ENCODE measurements at regions of chr2 and their contacts with region 1.

Region 1: DNA sequence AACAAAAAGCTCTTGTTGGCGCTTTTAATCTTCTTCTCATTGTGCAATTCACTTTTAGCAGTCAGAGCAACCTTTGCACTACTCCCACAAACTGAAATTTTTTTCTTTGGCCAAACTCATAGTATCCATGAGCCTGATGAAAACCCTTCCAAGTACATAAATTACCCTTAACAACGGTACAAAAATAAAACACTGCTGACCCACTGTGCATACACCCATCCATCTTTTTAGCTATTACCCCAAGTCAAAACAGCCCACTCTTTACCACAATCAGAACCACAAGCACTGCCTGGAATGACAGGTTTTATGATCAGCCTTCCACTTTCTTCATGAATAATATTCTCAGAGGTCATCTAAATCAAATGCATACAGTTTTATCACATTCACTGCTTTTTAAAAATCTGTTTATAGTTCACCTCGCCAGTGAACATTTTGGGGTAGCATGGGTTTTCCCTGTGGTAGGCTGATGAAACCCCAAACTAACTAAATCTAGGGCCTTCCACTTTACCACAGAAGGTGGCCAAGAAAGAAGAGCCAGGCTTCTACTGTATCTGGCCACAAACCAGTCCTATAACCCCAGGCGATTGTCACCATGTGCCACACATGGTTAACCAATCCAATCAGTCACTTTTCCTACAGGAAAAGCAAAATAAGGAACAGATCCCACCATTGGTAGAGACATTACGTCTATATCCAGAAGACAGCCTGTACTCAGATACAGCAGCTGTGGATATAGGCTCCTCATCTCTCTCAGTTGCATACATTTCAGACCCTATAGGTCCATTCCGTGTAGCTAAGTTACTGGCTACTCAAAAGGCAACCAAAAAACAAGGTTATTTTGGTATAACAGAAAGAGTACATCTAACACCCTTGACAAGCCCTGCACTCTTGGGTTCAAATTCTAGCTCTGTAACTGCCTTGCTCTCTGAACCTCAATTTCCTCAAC is 171.3 kb downstream of the THADA start:
- DNase-seq: peak in 1 of 2 experiments; percentile 38
- H3K4me3 ChIP-seq: no peak overlapping the region
- H3K4me3 Mint-ChIP-seq: peak overlapping the region; percentile 39
- H3K27ac Mint-ChIP-seq: peak overlapping the region; percentile 66
- H3K4me1 ChIP-seq: peaks cover 80% of the 10 kb centered on the region
- H3K4me1 Mint-ChIP-seq: peaks cover 46% of the 10 kb centered on the region
- H3K27me3 ChIP-seq: no peaks in the 10 kb centered on the region
- H3K27me3 Mint-ChIP-seq: no peaks in the 10 kb centered on the region
- CTCF ChIP-seq: no peak

Region 2: DNA sequence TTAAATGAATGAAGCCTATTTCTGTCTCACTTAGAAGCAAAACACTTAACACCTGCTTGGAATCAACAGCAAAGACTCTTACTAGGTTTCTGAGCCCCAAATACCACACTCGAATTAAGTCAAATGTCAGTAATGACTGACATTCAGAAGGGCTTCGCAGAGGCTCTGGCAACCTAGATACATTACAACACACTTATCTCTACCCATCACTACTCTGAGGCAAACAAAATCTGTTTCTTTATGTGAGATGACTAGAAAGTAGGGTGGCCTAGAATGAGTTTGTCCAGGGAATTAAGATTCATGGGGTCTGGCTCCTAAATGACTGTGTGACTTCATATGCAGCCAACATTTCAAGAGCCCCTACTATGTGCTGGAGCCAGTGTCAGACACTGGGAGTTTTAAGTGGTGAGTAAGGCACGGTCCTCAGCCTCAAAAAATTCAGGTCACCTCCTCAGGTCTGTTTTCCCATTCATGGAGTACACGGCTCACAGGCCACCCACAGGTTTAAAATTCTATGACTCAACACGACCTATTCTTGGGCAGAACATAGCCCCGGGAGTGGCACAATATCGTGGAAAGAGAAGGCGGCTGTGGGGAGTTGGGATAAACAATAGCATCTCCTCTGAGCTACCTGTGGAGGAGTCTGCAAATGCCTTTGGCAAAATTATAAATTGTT is 47.9 kb before region 1 on chr2:
- CTCF ChIA-PET with region 1: no interaction called
- POLR2A ChIA-PET with region 1: no interaction called
- intact Hi-C with region 1: loop called (anchors 1 kb)
- DNase-seq: no peak
- H3K4me3 ChIP-seq: no peak overlapping the region
- H3K4me3 Mint-ChIP-seq: peak overlapping the region; percentile 39
- H3K27ac Mint-ChIP-seq: peak overlapping the region; percentile 81
- H3K4me1 ChIP-seq: peaks cover 40% of the 10 kb centered on the region
- H3K4me1 Mint-ChIP-seq: peaks cover 44% of the 10 kb centered on the region
- H3K27me3 ChIP-seq: no peaks in the 10 kb centered on the region
- H3K27me3 Mint-ChIP-seq: no peaks in the 10 kb centered on the region
- CTCF ChIP-seq: no peak

Region 3: GRCh38 chr2:43389581-43390466 is 34.7 kb before region 1 on chr2:
- CTCF ChIA-PET with region 1: no interaction called
- POLR2A ChIA-PET with region 1: interaction called, 9 read pairs
- intact Hi-C with region 1: loop called (anchors 1 kb)
- DNase-seq: peak in 1 of 2 experiments; percentile 60
- H3K4me3 ChIP-seq: no peak overlapping the region
- H3K4me3 Mint-ChIP-seq: peak overlapping the region; percentile 50
- H3K27ac Mint-ChIP-seq: peak overlapping the region; percentile 61
- H3K4me1 ChIP-seq: peaks cover 48% of the 10 kb centered on the region
- H3K4me1 Mint-ChIP-seq: peaks cover 47% of the 10 kb centered on the region
- H3K27me3 ChIP-seq: no peaks in the 10 kb centered on the region
- H3K27me3 Mint-ChIP-seq: no peaks in the 10 kb centered on the region
- CTCF ChIP-seq: no peak

Region 4: DNA sequence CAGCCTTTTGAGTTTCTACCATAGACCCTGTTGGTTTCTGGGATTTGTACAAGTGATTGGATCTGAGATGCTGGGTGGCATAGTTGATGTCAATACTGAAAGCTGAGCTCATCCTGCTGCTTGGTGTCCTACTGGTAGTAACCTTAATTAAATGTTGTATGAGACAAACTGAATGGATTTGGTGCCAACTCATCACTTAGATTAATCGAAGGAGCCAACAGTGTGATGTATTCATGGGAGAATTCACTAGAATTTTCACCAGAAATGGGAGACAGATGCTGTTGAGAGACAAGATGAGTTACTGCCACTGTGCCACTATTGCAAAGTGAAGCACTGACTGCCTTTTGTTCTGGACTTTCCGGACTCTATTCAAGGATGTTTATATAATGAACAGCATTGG is 12.8 kb after region 1 on chr2:
- CTCF ChIA-PET with region 1: interaction called, 7 read pairs
- POLR2A ChIA-PET with region 1: interaction called, 8 read pairs
- intact Hi-C with region 1: loop called (anchors 1 kb)
- DNase-seq: peak in 1 of 2 experiments; percentile 54
- H3K4me3 ChIP-seq: no peak overlapping the region
- H3K4me3 Mint-ChIP-seq: no peak overlapping the region
- H3K27ac Mint-ChIP-seq: peak overlapping the region; percentile 77
- H3K4me1 ChIP-seq: peaks cover 59% of the 10 kb centered on the region
- H3K4me1 Mint-ChIP-seq: peaks cover 42% of the 10 kb centered on the region
- H3K27me3 ChIP-seq: no peaks in the 10 kb centered on the region
- H3K27me3 Mint-ChIP-seq: no peaks in the 10 kb centered on the region
- CTCF ChIP-seq: no peak

Region 5: DNA sequence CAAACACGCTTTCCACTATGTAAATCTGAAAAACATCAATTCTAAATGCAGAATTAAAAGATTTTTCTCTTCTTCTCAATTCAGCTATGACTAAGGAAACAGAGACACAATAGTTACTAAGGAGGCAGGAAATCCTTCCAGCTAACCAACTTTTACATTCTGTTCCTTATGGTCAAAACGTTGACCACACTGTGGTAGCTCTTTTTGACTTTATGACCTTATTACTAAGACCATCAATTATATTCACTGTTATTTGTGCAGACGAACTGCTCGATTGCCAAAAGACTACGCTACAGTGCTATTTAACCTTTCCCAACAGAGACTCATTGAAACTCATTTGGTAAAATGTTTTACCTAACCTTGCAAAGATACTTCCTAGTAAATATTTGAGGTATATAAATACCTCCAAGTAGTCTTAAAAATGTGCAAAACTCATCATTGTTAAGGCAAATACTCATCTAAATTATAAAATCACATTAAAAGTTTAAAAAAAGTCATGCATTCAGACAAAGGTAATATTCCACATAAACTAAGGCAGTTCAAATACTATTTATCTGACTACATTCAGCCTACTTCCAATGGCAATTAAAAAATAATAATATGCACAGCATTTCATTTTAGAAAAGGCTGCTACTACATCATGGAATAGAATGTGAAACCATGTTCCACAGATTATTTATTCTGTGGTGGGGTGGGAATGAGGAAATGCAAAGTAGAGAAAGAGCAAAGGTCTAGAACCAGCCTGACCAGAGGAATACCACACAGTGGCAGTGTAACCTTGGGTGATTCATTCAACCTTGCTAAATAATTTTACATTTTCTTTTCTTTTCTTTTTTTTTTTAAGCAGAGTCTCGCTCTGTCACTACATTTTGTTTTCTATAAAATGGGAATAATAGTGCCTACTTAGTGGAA is 31.5 kb after region 1 on chr2:
- CTCF ChIA-PET with region 1: no interaction called
- POLR2A ChIA-PET with region 1: no interaction called
- intact Hi-C with region 1: loop called (anchors 1 kb)
- DNase-seq: peak in 1 of 2 experiments; percentile 63
- H3K4me3 ChIP-seq: no peak overlapping the region
- H3K4me3 Mint-ChIP-seq: no peak overlapping the region
- H3K27ac Mint-ChIP-seq: peak overlapping the region; percentile 36
- H3K4me1 ChIP-seq: peaks cover 57% of the 10 kb centered on the region
- H3K4me1 Mint-ChIP-seq: peaks cover 52% of the 10 kb centered on the region
- H3K27me3 ChIP-seq: no peaks in the 10 kb centered on the region
- H3K27me3 Mint-ChIP-seq: no peaks in the 10 kb centered on the region
- CTCF ChIP-seq: peak in 1 of 2 experiments; percentile 42

Region 6: GRCh38 chr2:43462866-43463641 is 38.5 kb after region 1 on chr2:
- CTCF ChIA-PET with region 1: no interaction called
- POLR2A ChIA-PET with region 1: no interaction called
- intact Hi-C with region 1: loop called (anchors 1 kb)
- DNase-seq: peak; percentile 85 to 86
- H3K4me3 ChIP-seq: no peak overlapping the region
- H3K4me3 Mint-ChIP-seq: peak overlapping the region; percentile 58
- H3K27ac Mint-ChIP-seq: peak overlapping the region; percentile 89
- H3K4me1 ChIP-seq: peaks cover 65% of the 10 kb centered on the region
- H3K4me1 Mint-ChIP-seq: peaks cover 52% of the 10 kb centered on the region
- H3K27me3 ChIP-seq: no peaks in the 10 kb centered on the region
- H3K27me3 Mint-ChIP-seq: no peaks in the 10 kb centered on the region
- CTCF ChIP-seq: no peak

Region 7: GRCh38 chr2:43478411-43479086 is 54.0 kb after region 1 on chr2:
- CTCF ChIA-PET with region 1: no interaction called
- POLR2A ChIA-PET with region 1: no interaction called
- intact Hi-C with region 1: loop called (anchors 1 kb)
- DNase-seq: no peak
- H3K4me3 ChIP-seq: no peak overlapping the region
- H3K4me3 Mint-ChIP-seq: no peak overlapping the region
- H3K27ac Mint-ChIP-seq: peak overlapping the region; percentile 45
- H3K4me1 ChIP-seq: peaks cover 23% of the 10 kb centered on the region
- H3K4me1 Mint-ChIP-seq: peaks cover 53% of the 10 kb centered on the region
- H3K27me3 ChIP-seq: no peaks in the 10 kb centered on the region
- H3K27me3 Mint-ChIP-seq: no peaks in the 10 kb centered on the region
- CTCF ChIP-seq: no peak

Measured in Caco-2 (cell line).